PC-9 (cell line): ENCODE measurements at regions of chr14 and their contacts with region 1.

Region 1: DNA sequence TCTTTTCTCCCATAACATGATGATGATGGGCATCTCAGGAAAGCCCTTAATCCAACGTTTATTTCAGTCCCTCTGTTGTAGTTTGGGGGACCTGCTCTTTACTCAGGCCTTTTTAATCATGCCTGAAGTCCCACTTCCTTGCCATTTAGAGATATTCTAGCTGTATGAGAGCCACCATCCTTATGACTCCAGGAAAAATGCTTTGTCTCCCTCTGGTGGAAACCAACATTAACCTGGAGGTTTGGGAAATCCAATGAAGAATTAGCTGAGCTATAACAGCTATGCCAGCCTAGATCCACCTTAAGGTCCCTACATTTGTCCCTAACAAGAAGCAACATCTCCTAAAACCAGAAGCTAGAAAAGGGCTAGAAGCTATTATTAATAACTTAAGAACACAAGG is 1399.1 kb downstream of the LRFN5 start:
- DNase-seq: no peak
- H3K4me3 ChIP-seq: no peak overlapping the region
- H3K27ac ChIP-seq: no peak overlapping the region
- H3K4me1 ChIP-seq: no peaks in the 10 kb centered on the region
- H3K27me3 ChIP-seq: no peaks in the 10 kb centered on the region
- CTCF ChIP-seq: 0 out of 2 replicates have a peak, but pooled peaks have one; percentile 25

Region 2: GRCh38 chr14:42293180-42293579 is 712.6 kb before region 1 on chr14:
- CTCF ChIA-PET with region 1: no interaction called
- POLR2A ChIA-PET with region 1: interaction called, 16 read pairs
- intact Hi-C with region 1: no loop called
- DNase-seq: no peak
- H3K4me3 ChIP-seq: no peak overlapping the region
- H3K27ac ChIP-seq: no peak overlapping the region
- H3K4me1 ChIP-seq: no peaks in the 10 kb centered on the region
- H3K27me3 ChIP-seq: no peaks in the 10 kb centered on the region
- CTCF ChIP-seq: no peak